CD8-positive, alpha-beta T cell (primary cell): ENCODE measurements at regions of chr16 and their contacts with region 1.

Region 1: GRCh38 chr16:15822957-15823356 is 33.9 kb downstream of the MYH11 start:
- DNase-seq: no peak
- ATAC-seq: no peak
- H3K4me3 ChIP-seq: no peak overlapping the region
- H3K4me3 Mint-ChIP-seq: no peak overlapping the region
- H3K27ac ChIP-seq: no peak overlapping the region
- H3K27ac Mint-ChIP-seq: no peak overlapping the region
- H3K4me1 ChIP-seq: no peaks in the 10 kb centered on the region
- H3K4me1 Mint-ChIP-seq: no peaks in the 10 kb centered on the region
- H3K27me3 ChIP-seq: no peaks in the 10 kb centered on the region
- H3K27me3 Mint-ChIP-seq: peaks cover 3% of the 10 kb centered on the region
- CTCF ChIP-seq: no peak

Region 2: DNA sequence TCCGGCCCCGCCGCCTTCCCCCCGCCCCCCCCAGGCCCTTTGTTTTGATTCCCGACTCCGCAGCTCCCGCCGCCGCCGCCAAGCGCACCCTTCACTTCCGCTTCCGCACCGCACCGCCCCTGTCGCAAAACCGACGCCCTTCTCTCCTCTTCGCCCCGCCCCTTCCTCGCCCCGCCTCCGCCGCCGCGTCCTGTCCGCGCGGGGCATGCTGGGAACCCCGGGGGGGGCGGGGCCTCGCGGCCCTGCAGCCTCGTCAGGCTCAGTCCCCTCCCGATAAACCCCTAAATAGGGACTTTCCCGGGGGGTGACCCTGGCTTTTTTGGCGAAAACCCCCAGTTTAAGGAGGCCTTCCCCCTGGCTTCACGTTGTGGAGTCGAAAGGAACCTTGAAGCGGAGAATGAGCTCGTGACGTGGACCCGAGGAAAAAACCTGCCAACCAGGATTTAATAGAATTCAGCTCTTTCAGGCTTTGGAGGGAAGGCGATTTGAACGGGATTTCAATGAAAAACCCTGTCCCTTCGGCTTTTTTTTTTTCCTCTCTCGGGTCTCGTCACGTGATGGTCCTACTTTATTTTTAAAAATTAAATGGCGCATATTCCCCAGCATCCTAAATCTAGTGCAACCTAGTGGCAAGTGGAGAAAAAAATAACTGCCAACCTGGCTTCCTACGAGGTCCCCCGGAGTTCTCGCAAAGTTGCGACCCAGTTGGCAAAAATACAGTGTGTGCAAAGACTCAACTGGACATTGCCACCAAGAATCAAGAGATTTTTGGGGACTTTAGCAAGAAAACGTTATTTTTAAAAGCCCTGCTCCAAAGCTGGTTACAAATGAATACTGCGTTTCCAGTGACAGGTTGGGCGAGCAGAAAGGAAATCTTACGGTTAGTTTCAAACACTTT is 179.7 kb before region 1 on chr16 and contains the start of gene MARF1:
- CTCF ChIA-PET with region 1: no interaction called
- POLR2A ChIA-PET with region 1: no interaction called
- intact Hi-C with region 1: no loop called
- DNase-seq: peak; percentile 98 to 100 (median 100)
- ATAC-seq: peak; percentile 81
- H3K4me3 ChIP-seq: peak within 1 kb of the TSS; percentile 94 to 95
- H3K4me3 Mint-ChIP-seq: peak within 1 kb of the TSS; percentile 94
- H3K27ac ChIP-seq: peak within 1 kb of the TSS; percentile 98 to 100
- H3K27ac Mint-ChIP-seq: peak within 1 kb of the TSS; percentile 99
- H3K4me1 ChIP-seq: peaks cover 46% of the 10 kb centered on the region
- H3K4me1 Mint-ChIP-seq: peaks cover 47% of the 10 kb centered on the region
- H3K27me3 ChIP-seq: peaks cover 0 to 2% of the 10 kb centered on the region in 2 experiments
- H3K27me3 Mint-ChIP-seq: no peaks in the 10 kb centered on the region
- CTCF ChIP-seq: peak; percentile 26
- total RNA-seq, gene MARF1: 169 to 176 TPM

Region 3: DNA sequence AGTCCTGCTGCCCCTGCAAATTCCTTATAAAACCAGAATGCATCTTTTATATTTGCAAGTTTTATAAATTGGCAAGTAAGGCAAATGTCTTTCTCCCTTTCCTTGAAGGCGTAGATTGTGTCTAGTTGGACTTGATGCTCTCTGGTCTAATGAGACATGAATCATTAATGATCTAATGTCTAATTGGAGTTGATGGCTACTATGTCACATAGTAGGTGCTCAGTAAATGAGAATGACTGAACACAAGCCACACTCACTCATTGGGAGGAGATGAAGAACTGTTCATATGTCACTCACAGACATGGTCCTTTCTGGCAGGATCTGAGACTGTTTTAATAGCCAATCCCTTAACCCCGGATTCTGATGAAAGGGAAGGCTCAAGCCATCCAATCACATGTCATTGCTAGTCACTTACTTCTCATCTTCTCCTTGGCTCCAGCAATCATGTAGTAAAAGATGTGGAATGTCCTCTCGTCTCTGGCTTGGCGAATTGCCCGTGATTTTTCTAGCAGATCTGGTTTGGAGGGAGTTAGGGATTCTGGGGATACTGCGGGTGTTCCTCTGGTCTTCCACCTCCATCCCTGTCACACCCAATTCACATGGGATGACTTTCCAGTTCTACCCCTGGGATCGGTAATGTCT is 47.2 kb before region 1 on chr16:
- CTCF ChIA-PET with region 1: no interaction called
- POLR2A ChIA-PET with region 1: no interaction called
- intact Hi-C with region 1: no loop called
- DNase-seq: no peak
- ATAC-seq: no peak
- H3K4me3 ChIP-seq: no peak overlapping the region
- H3K4me3 Mint-ChIP-seq: no peak overlapping the region
- H3K27ac ChIP-seq: no peak overlapping the region
- H3K27ac Mint-ChIP-seq: no peak overlapping the region
- H3K4me1 ChIP-seq: no peaks in the 10 kb centered on the region
- H3K4me1 Mint-ChIP-seq: no peaks in the 10 kb centered on the region
- H3K27me3 ChIP-seq: no peaks in the 10 kb centered on the region
- H3K27me3 Mint-ChIP-seq: peaks cover 4% of the 10 kb centered on the region
- CTCF ChIP-seq: no peak

Region 4: GRCh38 chr16:15811481-15812400 is 11.2 kb before region 1 on chr16:
- CTCF ChIA-PET with region 1: interaction called, 19 read pairs
- POLR2A ChIA-PET with region 1: no interaction called
- intact Hi-C with region 1: no loop called
- DNase-seq: no peak
- ATAC-seq: no peak
- H3K4me3 ChIP-seq: no peak overlapping the region
- H3K4me3 Mint-ChIP-seq: no peak overlapping the region
- H3K27ac ChIP-seq: no peak overlapping the region
- H3K27ac Mint-ChIP-seq: no peak overlapping the region
- H3K4me1 ChIP-seq: no peaks in the 10 kb centered on the region
- H3K4me1 Mint-ChIP-seq: no peaks in the 10 kb centered on the region
- H3K27me3 ChIP-seq: no peaks in the 10 kb centered on the region
- H3K27me3 Mint-ChIP-seq: peaks cover 12% of the 10 kb centered on the region
- CTCF ChIP-seq: no peak